ENCODE measurements at regions of chr12 and their contacts with region 1.

Region 1: DNA sequence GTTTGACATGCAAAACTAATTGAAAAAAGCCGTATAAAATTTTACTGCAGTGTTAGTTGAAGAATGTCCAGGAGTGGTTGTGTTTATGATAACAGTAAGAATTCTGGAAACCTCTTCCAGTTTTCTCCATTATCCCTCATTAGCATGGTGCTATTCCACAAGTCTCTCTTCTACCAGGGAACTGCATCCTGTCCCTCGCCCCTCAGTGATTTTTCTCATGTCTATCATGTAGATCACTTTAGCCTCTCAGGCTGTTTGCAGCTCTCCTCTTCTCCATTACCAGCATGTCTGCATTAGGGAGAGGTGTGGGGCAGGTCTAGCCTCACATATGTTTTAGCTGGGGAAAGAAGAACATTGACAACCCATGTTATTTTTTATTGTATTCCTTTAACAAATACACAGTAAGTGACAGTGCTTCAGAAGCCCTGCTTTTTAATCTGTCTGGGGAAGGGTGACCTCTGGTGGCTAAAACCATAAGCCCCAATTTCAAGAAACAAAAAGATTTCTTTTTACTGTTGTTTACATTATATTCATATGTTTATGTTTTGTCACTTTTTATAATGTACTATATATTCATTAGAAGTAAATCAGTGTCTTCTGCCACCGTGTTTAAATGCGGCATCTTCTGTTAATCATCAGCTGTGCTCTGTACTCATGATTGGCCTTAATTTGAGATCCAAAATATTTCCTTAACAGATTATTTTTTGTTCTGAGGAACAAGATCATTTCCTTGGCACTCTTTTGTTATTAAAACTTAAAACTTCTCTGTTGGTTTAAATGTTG is 70.7 kb downstream of the RASSF8 start:
- DNase-seq: no peak
- ATAC-seq: peak; percentile 70 to 76
- H3K4me3 ChIP-seq: no peak overlapping the region
- H3K27ac ChIP-seq: peak overlapping the region in 1 of 4 donors; percentile 27
- H3K4me1 ChIP-seq: peaks cover 23 to 39% of the 10 kb centered on the region in 2 donors
- H3K27me3 ChIP-seq: no peaks in the 10 kb centered on the region
- CTCF ChIP-seq: peak; percentile 62 to 87 (median 68)
- POLR2A ChIP-seq: no peak

Region 2: GRCh38 chr12:25436203-25437030 is 592.7 kb before region 1 on chr12:
- in situ Hi-C with region 1: loop called (anchors 5 to 25 kb)
- intact Hi-C with region 1: loop called (anchors 2 kb)
- DNase-seq: no peak
- ATAC-seq: peak; percentile 47 to 87
- H3K4me3 ChIP-seq: peak overlapping the region; percentile 37 to 51 (median 48)
- H3K27ac ChIP-seq: no peak overlapping the region
- H3K4me1 ChIP-seq: no peaks in the 10 kb centered on the region
- H3K27me3 ChIP-seq: no peaks in the 10 kb centered on the region
- CTCF ChIP-seq: peak; percentile 45 to 77 (median 64)
- POLR2A ChIP-seq: no peak

Region 3: DNA sequence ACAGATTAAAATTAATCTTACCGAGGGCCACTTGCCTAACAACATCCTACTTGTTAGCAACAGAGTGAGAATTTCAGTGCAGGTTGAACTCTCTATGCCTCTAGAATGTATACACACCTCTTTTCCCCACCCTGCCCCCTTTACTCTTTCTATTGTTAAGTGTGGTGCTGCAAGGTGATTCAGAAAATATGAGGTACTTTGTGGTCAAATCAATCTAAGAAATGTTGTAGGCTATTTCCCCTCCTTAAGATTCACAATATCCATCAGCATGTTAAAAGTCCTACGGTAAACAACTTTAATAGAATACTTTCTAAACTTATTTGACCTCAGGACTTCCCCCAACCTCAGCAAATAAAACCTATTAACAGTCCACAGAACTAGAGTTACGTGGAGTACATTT is 582.1 kb before region 1 on chr12:
- in situ Hi-C with region 1: loop called in 2 of 4 experiments (anchors 10 to 25 kb)
- intact Hi-C with region 1: no loop called
- DNase-seq: no peak
- ATAC-seq: no peak
- H3K4me3 ChIP-seq: no peak overlapping the region
- H3K27ac ChIP-seq: no peak overlapping the region
- H3K4me1 ChIP-seq: no peaks in the 10 kb centered on the region
- H3K27me3 ChIP-seq: no peaks in the 10 kb centered on the region
- CTCF ChIP-seq: no peak
- POLR2A ChIP-seq: no peak